Calu3 (cell line): ENCODE measurements at regions of chr15 and their contacts with region 1.

Region 1: DNA sequence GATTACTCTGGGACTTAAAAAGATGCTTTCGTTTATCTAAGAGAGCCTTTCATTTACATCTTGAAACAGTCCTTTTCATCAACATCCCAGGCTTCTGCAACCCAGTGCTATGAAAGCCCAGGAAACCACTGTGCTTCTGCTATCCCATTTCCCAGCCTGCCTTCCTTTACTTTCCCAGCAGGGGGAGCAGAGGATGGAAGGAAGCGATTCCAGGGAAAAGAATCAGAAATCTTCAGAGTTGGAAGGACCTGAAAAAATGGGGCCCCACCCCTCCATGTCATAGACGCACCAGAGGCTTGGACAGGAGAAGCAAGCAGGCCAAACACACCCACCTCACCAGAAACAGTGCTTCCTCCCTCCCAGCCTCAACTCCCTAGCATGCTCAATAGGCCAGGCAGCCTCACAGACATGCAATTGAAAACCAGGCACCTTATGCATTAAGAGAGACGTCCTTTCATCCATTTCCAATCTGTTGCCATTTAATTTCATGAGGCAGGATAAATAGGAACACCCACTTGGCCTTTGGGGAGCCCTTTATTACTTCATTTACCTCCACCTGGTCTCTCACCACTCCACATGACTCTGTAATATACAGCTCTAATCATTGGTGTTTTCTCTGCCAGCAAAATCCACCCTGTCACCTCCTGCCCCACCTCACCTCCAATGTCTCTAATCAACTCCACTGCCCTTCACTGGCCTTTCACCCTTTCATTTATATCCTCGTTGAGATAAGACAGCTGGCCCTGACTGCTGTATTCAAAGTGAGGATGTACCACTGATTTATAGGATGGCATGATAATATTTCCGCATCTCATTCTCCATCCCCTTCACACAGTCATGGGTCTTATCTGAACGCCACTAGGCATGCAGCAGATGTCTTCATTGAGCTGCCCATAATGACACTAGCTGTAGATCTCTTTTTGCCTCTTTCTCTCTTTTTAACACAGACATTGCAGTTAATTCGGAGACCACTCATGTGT is 583.9 kb downstream of the NTRK3 start:
- DNase-seq: no peak
- H3K4me3 Mint-ChIP-seq: no peak overlapping the region
- H3K27ac Mint-ChIP-seq: no peak overlapping the region
- H3K4me1 Mint-ChIP-seq: no peaks in the 10 kb centered on the region
- H3K27me3 Mint-ChIP-seq: no peaks in the 10 kb centered on the region
- CTCF ChIP-seq: no peak

Region 2: GRCh38 chr15:87518957-87519356 is 153.6 kb before region 1 on chr15:
- CTCF ChIA-PET with region 1: no interaction called
- intact Hi-C with region 1: no loop called
- DNase-seq: no peak
- H3K4me3 Mint-ChIP-seq: no peak overlapping the region
- H3K27ac Mint-ChIP-seq: no peak overlapping the region
- H3K4me1 Mint-ChIP-seq: no peaks in the 10 kb centered on the region
- H3K27me3 Mint-ChIP-seq: no peaks in the 10 kb centered on the region
- CTCF ChIP-seq: no peak

Region 3: DNA sequence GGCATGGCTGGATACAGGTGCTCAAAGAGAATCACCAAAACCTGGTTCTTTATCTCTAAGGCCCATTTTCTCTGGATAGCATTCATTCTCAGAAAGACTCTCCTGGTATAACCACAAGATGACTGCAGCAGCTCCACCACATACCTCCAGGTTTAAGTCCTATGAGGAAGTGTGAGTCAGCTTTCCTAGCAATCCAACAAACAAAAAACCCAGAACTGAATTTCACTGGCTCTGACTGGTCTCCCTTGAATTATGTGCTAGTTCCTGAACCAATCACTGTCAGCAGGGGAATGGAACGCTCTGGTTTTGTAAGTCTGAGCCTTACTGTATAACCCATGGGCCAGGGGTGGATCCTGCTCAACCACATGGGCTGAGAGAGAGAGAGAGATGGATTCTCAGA is 767.4 kb after region 1 on chr15:
- CTCF ChIA-PET with region 1: no interaction called
- intact Hi-C with region 1: loop called (anchors 10 kb)
- DNase-seq: peak; percentile 8
- H3K4me3 Mint-ChIP-seq: no peak overlapping the region
- H3K27ac Mint-ChIP-seq: no peak overlapping the region
- H3K4me1 Mint-ChIP-seq: no peaks in the 10 kb centered on the region
- H3K27me3 Mint-ChIP-seq: peaks cover 62% of the 10 kb centered on the region
- CTCF ChIP-seq: no peak